ENCODE measurements at regions of chr2 and their contacts with region 1.

Region 1: GRCh38 chr2:105576440-105577252 is 168.1 kb upstream of the NCK2 start:
- DNase-seq: peak; percentile 35 to 66 (median 55)
- H3K4me3 ChIP-seq: no peak overlapping the region
- H3K27ac ChIP-seq: peak overlapping the region in 4 of 5 donors; percentile 29 to 73 (median 45)
- H3K4me1 ChIP-seq: peaks cover 13 to 22% of the 10 kb centered on the region in 2 donors
- H3K27me3 ChIP-seq: no peaks in the 10 kb centered on the region
- CTCF ChIP-seq: peak; percentile 42 to 74 (median 66)
- POLR2A ChIP-seq: no peak

Region 2: GRCh38 chr2:105802587-105802986 is 225.9 kb after region 1 on chr2:
- intact Hi-C with region 1: loop called in 1 of 2 experiments (anchors 10 kb)
- DNase-seq: no peak
- H3K4me3 ChIP-seq: no peak overlapping the region
- H3K27ac ChIP-seq: no peak overlapping the region
- H3K4me1 ChIP-seq: peaks cover 11 to 62% of the 10 kb centered on the region in 2 donors
- H3K27me3 ChIP-seq: no peaks in the 10 kb centered on the region
- CTCF ChIP-seq: no peak
- POLR2A ChIP-seq: no peak

Region 3: GRCh38 chr2:106085181-106085940 is 508.7 kb after region 1 on chr2:
- intact Hi-C with region 1: loop called in 1 of 2 experiments (anchors 10 kb)
- DNase-seq: peak in 2 of 7 donors; percentile 34 to 35
- H3K4me3 ChIP-seq: no peak overlapping the region
- H3K27ac ChIP-seq: no peak overlapping the region
- H3K4me1 ChIP-seq: no peaks in the 10 kb centered on the region
- H3K27me3 ChIP-seq: no peaks in the 10 kb centered on the region
- CTCF ChIP-seq: peak in 3 of 6 experiments; percentile 28 to 35 (median 32)
- POLR2A ChIP-seq: no peak